Activated naive CD4-positive, alpha-beta T cell treated with anti-CD3 and anti-CD28 coated beads for 36 hours (primary cell): ENCODE measurements at regions of chr11 and their contacts with region 1.

Region 1: DNA sequence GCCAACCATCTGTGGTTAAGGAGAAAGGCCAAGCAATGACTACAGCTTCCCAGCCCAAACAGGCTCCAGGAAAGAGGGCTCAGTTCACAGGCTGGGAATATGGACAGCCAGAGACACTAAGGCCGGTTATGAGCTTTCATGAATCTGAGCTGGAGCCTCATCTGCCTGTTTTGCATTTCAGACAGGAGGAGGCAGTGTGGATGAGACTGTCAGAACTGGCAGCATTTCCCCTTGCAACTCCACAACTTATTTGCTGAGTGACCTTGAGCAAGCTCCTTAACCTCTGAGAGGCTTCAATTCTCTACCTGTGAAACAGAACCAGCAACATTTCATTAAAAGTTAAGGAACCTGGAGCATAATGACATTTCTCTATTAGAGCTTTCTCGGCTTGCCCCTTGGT is 264.0 kb downstream of the ETS1 start:
- DNase-seq: peak; percentile 72
- H3K4me3 Mint-ChIP-seq: peak overlapping the region; percentile 32
- H3K27ac Mint-ChIP-seq: peak overlapping the region; percentile 90
- H3K4me1 Mint-ChIP-seq: peaks cover 87% of the 10 kb centered on the region
- H3K27me3 Mint-ChIP-seq: no peaks in the 10 kb centered on the region

Region 2: DNA sequence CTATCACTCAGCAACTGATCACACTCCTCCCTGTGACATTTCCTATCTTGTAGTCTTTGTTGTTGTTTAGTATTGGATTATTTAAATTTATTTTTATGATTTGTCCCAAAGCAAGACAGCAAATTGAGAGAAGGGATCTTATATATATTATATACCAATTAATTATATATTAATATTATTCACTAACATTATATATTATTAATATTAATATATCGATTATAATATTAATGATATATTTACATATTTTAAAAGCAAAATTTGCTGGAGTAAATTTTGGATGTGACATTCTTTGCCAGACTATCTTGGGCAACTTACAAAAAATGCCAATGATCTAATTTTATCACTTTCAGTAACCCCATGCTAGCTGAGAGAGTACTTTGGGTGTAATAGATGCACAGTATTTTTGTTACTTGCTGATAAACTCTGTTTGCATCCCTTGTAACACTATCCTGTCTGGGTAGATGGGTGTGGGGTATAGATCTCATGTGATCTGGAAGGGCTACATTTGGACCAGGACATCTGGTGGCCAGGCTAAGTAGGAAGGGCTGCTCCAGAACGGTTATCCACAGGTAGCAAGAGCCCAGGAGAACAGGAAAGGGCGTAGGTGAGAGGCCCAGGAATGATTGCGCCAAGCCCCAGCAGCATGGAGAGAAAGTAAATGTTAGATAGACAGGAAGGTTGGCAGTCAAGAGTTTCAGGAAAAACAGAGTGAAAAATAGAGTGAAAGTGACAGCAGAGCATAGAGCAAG is 714.2 kb before region 1 on chr11:
- CTCF ChIA-PET with region 1: no interaction called
- intact Hi-C with region 1: no loop called
- DNase-seq: no peak
- H3K4me3 Mint-ChIP-seq: no peak overlapping the region
- H3K27ac Mint-ChIP-seq: no peak overlapping the region
- H3K4me1 Mint-ChIP-seq: no peaks in the 10 kb centered on the region
- H3K27me3 Mint-ChIP-seq: no peaks in the 10 kb centered on the region

Region 3: DNA sequence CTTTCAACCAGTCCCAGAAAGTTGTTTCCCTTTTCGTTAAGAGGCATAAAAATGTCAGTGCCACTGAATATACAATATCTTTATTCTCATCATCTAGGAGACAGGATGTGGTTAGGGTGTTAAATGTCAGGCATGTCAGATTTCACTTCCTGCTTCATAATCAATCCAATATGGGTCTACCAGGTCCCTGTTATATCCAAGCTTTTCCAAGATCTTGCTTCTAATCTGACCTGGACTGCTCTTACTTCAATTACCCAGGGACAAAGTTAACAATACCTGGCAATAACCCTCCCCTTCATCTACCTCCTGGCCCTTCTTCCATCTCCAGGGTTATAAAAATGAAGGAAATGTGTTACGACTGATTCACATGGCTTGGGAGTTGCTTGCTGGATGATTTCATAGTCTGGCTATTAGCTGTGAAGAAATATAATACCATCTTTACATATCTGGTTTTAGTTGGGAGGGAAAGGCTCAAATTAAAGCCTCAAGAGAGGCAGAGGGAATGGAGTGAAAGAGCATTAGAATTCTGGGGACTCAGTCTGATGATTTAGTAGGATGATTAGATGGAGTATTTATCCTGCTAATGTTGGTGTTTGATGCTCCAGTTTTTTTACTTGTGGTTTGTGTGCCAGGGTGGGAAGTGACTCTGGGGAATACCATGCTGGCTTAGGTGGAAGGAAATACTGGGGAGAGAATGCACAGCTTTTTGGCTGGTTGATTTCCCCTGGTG is 270.3 kb before region 1 on chr11:
- CTCF ChIA-PET with region 1: no interaction called
- intact Hi-C with region 1: loop called (anchors 5 kb)
- DNase-seq: no peak
- H3K4me3 Mint-ChIP-seq: peak overlapping the region; percentile 49
- H3K27ac Mint-ChIP-seq: peak overlapping the region; percentile 86
- H3K4me1 Mint-ChIP-seq: peaks cover 67% of the 10 kb centered on the region
- H3K27me3 Mint-ChIP-seq: no peaks in the 10 kb centered on the region

Region 4: DNA sequence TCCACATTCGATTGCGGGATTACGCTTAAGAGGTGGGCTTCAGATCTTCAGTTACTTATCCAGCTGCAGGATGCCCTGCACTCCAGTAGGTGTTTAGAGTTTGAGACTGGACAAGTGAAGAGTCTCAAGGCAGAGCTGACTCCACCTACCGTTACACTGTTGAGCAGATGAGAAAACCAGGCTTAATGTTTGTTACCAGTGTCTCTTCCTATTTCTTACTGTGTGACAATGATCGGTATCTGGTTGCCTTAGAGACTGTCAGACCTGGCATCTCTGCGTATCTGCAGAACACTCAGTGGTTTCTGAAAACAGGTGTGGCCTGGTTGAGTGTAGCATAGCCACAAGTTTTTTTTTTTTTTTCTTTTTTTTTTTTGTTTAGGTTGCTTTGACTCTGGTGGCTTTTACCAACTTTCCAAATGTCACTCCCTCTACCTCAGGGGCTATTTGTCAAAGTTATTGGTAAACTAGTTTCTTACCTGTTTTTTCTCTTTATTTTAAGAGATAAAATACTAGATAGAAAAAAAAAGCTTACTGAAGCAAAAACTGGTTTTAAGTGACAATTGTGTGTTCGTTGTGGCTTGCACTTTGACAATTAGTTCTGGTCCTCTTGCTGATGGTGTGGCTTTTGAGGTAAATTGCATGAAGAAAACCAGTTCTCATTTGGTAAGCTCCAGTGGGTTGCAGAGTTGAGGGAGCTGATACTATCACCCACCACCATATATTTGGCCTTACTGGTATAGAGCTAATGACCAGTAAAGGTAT is 20.8 kb before region 1 on chr11:
- CTCF ChIA-PET with region 1: interaction called, 35 read pairs
- intact Hi-C with region 1: loop called (anchors 1 kb)
- DNase-seq: peak; percentile 79
- H3K4me3 Mint-ChIP-seq: peak overlapping the region; percentile 74
- H3K27ac Mint-ChIP-seq: peak overlapping the region; percentile 93
- H3K4me1 Mint-ChIP-seq: peaks cover 80% of the 10 kb centered on the region
- H3K27me3 Mint-ChIP-seq: no peaks in the 10 kb centered on the region

Region 5: GRCh38 chr11:128361451-128362020 is 38.2 kb after region 1 on chr11:
- CTCF ChIA-PET with region 1: no interaction called
- intact Hi-C with region 1: no loop called
- DNase-seq: peak; percentile 37
- H3K4me3 Mint-ChIP-seq: no peak overlapping the region
- H3K27ac Mint-ChIP-seq: no peak overlapping the region
- H3K4me1 Mint-ChIP-seq: peaks cover 13% of the 10 kb centered on the region
- H3K27me3 Mint-ChIP-seq: no peaks in the 10 kb centered on the region

Region 6: GRCh38 chr11:128422576-128423370 is 99.4 kb after region 1 on chr11:
- CTCF ChIA-PET with region 1: interaction called, 6 read pairs
- intact Hi-C with region 1: loop called (anchors 1 kb)
- DNase-seq: peak; percentile 96
- H3K4me3 Mint-ChIP-seq: peak overlapping the region; percentile 44
- H3K27ac Mint-ChIP-seq: peak overlapping the region; percentile 75
- H3K4me1 Mint-ChIP-seq: peaks cover 63% of the 10 kb centered on the region
- H3K27me3 Mint-ChIP-seq: no peaks in the 10 kb centered on the region

Region 7: DNA sequence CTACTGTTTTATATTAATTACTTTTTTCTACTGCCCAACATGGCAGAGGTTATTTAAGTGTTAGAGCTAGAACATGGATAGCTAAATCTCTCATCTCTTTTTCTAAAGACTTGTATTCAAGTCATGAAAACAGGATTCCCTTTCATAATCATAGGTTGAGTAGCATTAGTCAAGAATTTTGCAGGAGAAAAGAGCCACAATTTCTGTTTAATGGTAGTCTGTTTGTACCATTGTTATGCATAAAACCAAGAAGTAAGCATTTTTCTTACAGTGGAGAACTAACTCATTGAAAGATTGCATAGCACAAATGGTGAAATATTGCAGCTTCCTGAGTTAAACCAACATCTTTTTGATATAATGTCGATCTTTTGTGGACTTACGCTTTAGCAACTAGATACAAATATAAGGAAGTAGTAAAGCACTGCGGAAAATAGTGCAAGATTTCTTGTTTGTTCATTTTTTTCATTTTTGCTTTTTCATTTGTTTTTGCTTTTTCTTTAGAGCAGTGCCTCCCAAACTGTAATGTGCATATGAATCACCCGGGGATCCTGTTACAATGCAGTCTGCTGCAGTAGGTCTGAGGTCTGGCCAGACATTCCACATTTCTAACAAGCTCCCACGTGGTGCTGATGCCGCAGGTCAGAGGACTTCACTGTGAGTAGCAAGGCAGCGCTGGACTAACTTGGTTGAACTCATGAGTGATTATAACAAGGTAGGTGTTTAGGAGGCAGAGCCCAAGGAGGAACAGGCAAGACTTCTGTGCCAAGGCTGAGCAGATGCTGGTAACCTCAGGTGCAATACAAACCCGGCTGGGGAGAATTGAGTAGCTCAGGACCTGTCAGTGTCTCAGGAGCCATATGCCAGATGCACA is 259.4 kb after region 1 on chr11:
- CTCF ChIA-PET with region 1: no interaction called
- intact Hi-C with region 1: loop called (anchors 1 kb)
- DNase-seq: peak; percentile 50
- H3K4me3 Mint-ChIP-seq: peak overlapping the region; percentile 69
- H3K27ac Mint-ChIP-seq: peak overlapping the region; percentile 78
- H3K4me1 Mint-ChIP-seq: peaks cover 62% of the 10 kb centered on the region
- H3K27me3 Mint-ChIP-seq: no peaks in the 10 kb centered on the region